WTC11 (cell line): ENCODE measurements at regions of chr17 and their contacts with region 1.

Region 1: DNA sequence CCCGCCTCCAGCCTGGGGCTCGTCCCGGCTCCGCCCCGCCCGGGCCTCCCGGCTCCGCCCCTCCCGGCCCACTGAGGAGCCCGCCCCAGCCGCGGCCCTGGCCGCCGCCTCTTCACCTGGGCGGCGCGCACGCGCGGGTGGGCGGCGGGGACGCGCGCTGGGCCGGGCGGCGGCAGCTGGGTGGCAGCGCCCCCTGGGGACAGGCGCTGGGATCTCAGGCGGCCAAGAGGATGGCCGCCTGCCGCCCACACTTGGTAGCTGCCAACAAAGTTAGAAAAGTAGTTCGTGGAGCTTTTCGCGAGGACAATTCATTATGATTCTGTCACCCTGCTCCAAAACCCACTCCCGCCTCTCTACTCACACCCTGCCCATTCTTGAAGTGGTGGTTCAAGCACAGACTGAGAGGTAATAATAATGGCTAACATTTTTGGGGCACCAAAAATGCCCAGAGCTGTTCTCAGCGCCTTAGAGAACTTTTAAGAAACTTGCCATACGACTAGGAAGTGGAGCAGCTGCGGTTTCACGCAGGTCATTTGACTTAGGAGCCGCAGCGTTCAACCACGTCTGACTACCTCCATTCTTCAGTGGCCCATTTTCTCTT is 340 bp upstream of the MYO1D start:
- DNase-seq: peak; percentile 91
- ATAC-seq: peak; percentile 95
- H3K4me3 Mint-ChIP-seq: peak overlapping the region; percentile 61
- H3K27ac Mint-ChIP-seq: peak overlapping the region; percentile 67; the same call in 1 of the 2 replicates
- H3K4me1 Mint-ChIP-seq: peaks cover 20% of the 10 kb centered on the region
- H3K27me3 Mint-ChIP-seq: peaks cover 2% of the 10 kb centered on the region; the same call in 1 of the 2 replicates
- CTCF ChIP-seq: peak; percentile 86

Region 2: DNA sequence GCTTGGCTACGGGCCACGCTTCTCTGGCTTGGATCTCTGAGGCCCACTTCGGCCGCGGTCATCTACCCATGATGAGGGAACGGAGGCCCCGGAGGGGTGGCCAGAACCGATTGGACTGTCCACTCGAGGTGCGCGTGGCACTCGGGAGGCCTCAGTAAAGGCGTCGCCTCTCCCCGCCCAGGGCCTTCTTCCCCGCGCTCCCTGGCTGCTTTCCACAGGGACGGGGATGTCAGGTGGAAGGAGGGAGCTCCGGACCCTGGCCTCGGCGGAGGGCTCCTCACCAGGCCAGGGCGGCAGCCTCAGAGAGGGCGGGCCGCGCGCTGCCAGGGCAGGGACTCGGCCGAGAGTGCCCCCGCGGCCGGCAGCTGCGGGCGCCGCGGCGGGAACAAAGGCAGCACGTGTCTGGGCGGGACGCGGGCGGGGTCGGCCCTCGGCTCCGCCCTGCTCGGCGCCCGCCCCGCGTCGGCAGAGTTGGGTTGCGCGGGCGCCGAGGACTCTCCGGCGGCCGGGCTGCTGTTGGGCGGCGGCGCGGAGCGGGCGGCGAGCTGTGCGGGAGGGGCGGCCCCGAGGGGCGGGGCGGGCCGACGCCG is 391.1 kb before region 1 on chr17:
- CTCF ChIA-PET with region 1: interaction called, 11 read pairs
- POLR2A ChIA-PET with region 1: no interaction called
- DNase-seq: peak; percentile 71
- ATAC-seq: peak; percentile 73
- H3K4me3 Mint-ChIP-seq: peak overlapping the region; percentile 58
- H3K27ac Mint-ChIP-seq: peak overlapping the region; percentile 33; the same call in 1 of the 2 replicates
- H3K4me1 Mint-ChIP-seq: peaks cover 56% of the 10 kb centered on the region
- H3K27me3 Mint-ChIP-seq: no peaks in the 10 kb centered on the region
- CTCF ChIP-seq: no peak

Region 3: GRCh38 chr17:32684087-32684958 is 192.9 kb before region 1 on chr17:
- CTCF ChIA-PET with region 1: no interaction called
- POLR2A ChIA-PET with region 1: no interaction called
- DNase-seq: no peak
- ATAC-seq: no peak
- H3K4me3 Mint-ChIP-seq: peak overlapping the region; percentile 68
- H3K27ac Mint-ChIP-seq: peak overlapping the region; percentile 90
- H3K4me1 Mint-ChIP-seq: peaks cover 14% of the 10 kb centered on the region
- H3K27me3 Mint-ChIP-seq: no peaks in the 10 kb centered on the region; the same call in 1 of the 2 replicates
- CTCF ChIP-seq: no peak

Region 4: DNA sequence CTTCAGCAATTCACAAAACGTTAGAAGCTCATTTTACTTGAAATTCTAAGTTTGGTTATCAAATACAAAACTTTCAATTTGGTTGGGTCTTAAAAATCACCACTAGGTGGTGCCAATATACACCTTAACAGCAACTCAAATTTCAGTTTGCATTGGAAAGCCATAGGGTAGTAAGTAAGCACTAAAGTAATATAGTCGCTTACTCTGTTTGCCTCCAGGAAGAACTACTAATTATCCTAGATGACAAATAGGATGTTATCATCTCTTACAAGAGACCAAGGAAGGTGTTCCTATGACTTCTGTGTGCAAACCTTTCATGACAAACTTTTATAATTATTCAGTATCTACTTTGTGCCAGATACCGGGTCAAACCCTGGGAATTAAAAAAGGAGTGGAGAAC is 93.7 kb before region 1 on chr17:
- CTCF ChIA-PET with region 1: interaction called, 119 read pairs
- POLR2A ChIA-PET with region 1: interaction called, 4 read pairs
- DNase-seq: no peak
- ATAC-seq: 0 out of 2 replicates have a peak, but pooled peaks have one; percentile 32
- H3K4me3 Mint-ChIP-seq: no peak overlapping the region
- H3K27ac Mint-ChIP-seq: no peak overlapping the region
- H3K4me1 Mint-ChIP-seq: peaks cover 6% of the 10 kb centered on the region
- H3K27me3 Mint-ChIP-seq: no peaks in the 10 kb centered on the region
- CTCF ChIP-seq: peak; percentile 64

Region 5: GRCh38 chr17:32828822-32829221 is 48.4 kb before region 1 on chr17:
- CTCF ChIA-PET with region 1: interaction called, 16 read pairs
- POLR2A ChIA-PET with region 1: interaction called, 3 read pairs
- DNase-seq: no peak
- ATAC-seq: no peak
- H3K4me3 Mint-ChIP-seq: no peak overlapping the region
- H3K27ac Mint-ChIP-seq: no peak overlapping the region
- H3K4me1 Mint-ChIP-seq: 0 out of 2 replicates have a peak, but pooled peaks cover 3% of the 10 kb centered on the region
- H3K27me3 Mint-ChIP-seq: no peaks in the 10 kb centered on the region
- CTCF ChIP-seq: no peak

Region 6: GRCh38 chr17:32903774-32904673 is 26.8 kb after region 1 on chr17:
- CTCF ChIA-PET with region 1: interaction called, 18 read pairs
- POLR2A ChIA-PET with region 1: no interaction called
- DNase-seq: no peak
- ATAC-seq: no peak
- H3K4me3 Mint-ChIP-seq: no peak overlapping the region
- H3K27ac Mint-ChIP-seq: no peak overlapping the region
- H3K4me1 Mint-ChIP-seq: peaks cover 12% of the 10 kb centered on the region
- H3K27me3 Mint-ChIP-seq: peaks cover 3% of the 10 kb centered on the region; the same call in 1 of the 2 replicates
- CTCF ChIP-seq: no peak

Region 7: GRCh38 chr17:32936894-32937500 is 59.7 kb after region 1 on chr17:
- CTCF ChIA-PET with region 1: interaction called, 44 read pairs
- POLR2A ChIA-PET with region 1: interaction called, 3 read pairs
- DNase-seq: peak; percentile 92
- ATAC-seq: peak; percentile 95
- H3K4me3 Mint-ChIP-seq: no peak overlapping the region
- H3K27ac Mint-ChIP-seq: peak overlapping the region; percentile 93
- H3K4me1 Mint-ChIP-seq: peaks cover 22% of the 10 kb centered on the region
- H3K27me3 Mint-ChIP-seq: no peaks in the 10 kb centered on the region
- CTCF ChIP-seq: peak; percentile 85

Region 8: GRCh38 chr17:33164169-33164881 is 287.1 kb after region 1 on chr17:
- CTCF ChIA-PET with region 1: no interaction called
- POLR2A ChIA-PET with region 1: no interaction called
- DNase-seq: no peak
- ATAC-seq: no peak
- H3K4me3 Mint-ChIP-seq: no peak overlapping the region
- H3K27ac Mint-ChIP-seq: no peak overlapping the region
- H3K4me1 Mint-ChIP-seq: no peaks in the 10 kb centered on the region
- H3K27me3 Mint-ChIP-seq: peaks cover 3% of the 10 kb centered on the region
- CTCF ChIP-seq: no peak